ENCODE measurements at regions of chr6 and their contacts with region 1.

Region 1: DNA sequence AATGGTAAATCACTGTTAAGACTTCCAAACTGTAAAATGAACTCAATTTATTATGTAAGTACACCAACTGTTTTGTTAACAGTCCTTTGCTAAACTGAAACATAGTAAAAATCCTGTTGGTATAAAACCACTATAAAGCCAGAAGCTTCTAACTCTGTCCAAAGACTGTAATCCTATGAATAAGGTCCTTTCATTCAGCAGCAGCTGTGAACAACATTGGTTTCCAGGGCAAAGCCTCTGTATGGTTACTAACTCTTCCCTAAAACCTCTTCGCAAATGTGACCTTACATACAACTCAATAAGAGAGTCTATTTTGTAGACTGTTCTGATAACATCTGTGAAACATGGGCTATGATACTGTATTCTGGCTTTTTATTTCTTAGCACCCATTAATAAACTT is 40.1 kb downstream of the NUP153 start:
- DNase-seq: no peak
- H3K4me3 ChIP-seq: no peak overlapping the region
- H3K27ac ChIP-seq: no peak overlapping the region
- H3K4me1 ChIP-seq: no peaks in the 10 kb centered on the region
- H3K27me3 ChIP-seq: no peaks in the 10 kb centered on the region
- CTCF ChIP-seq: no peak

Region 2: DNA sequence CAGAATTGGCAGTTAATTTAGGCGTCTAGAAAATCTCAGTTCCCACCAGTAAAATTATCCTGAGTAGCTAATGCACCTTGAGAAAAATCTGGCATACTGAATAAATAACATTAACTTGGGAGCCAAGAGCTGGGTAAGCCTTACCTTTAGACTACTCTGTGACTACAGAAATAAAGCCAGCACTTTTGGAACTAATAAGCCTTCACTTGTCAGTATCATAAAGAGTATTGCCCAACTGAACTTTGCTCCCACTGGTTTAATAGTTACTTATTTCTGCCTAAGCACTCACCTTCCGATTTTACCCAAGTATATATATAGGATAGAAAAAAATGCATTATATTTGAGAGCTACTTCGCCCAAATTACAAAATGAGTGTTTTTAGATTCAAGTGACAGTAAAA is 55.8 kb before region 1 on chr6:
- CTCF ChIA-PET with region 1: no interaction called
- dilution Hi-C with region 1: no loop called
- in situ Hi-C with region 1: no loop called
- intact Hi-C with region 1: no loop called
- DNase-seq: no peak
- H3K4me3 ChIP-seq: no peak overlapping the region
- H3K27ac ChIP-seq: no peak overlapping the region
- H3K4me1 ChIP-seq: no peaks in the 10 kb centered on the region
- H3K27me3 ChIP-seq: no peaks in the 10 kb centered on the region
- CTCF ChIP-seq: no peak

Region 3: GRCh38 chr6:17768388-17768787 is 101.7 kb after region 1 on chr6:
- CTCF ChIA-PET with region 1: no interaction called
- dilution Hi-C with region 1: no loop called
- in situ Hi-C with region 1: no loop called
- intact Hi-C with region 1: loop called (anchors 10 kb)
- DNase-seq: peak; percentile 14
- H3K4me3 ChIP-seq: no peak overlapping the region
- H3K27ac ChIP-seq: no peak overlapping the region
- H3K4me1 ChIP-seq: no peaks in the 10 kb centered on the region
- H3K27me3 ChIP-seq: no peaks in the 10 kb centered on the region
- CTCF ChIP-seq: no peak

Region 4: DNA sequence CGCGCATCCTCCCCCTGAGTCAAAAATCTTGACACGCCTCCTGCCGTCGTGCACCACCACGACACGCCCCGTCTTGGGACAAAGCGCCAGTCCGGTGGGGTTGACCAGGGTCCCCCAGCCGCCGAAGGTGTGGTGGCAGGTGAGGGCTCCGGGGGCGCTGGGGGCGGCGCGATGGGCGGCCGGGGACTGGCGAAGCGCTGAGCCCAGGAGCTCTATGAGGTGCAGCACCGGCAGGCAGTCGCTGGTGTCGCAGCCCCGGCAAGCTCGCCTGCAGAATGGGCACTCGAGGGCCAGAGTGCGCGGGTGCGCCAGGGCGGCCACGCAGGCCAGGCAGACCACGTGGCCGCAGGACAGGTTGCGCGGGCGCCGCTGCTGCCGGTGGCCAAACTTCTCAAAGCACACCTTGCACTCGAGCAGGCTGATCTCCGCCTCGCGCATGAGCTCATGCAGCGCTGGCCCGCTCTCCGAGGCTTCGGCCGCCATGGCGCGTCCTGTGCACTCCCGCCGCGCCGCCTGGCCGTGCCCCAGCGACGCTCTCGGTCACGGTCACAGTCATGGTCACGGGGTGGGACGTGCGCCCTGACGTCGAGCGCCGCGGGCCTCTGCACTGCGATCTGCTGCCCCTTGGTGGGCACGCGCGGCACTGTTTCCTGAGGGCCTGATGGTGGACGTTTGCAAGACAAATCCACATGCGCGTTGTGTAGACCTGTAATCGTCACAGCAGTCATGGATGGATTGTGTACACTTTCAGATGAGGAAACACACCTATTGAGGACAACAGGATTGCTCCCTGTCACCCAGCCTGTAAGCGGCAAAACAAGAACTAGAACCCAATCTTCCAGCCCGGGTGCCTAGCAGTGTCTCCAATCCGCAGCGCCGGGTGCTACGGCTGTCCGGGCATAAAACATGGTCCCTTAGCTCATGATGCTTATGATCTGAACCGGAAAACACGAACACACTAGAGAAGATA is 455.8 kb after region 1 on chr6 and contains the start of gene NHLRC1:
- CTCF ChIA-PET with region 1: no interaction called
- dilution Hi-C with region 1: no loop called
- in situ Hi-C with region 1: no loop called
- intact Hi-C with region 1: no loop called
- DNase-seq: peak; percentile 84
- H3K4me3 ChIP-seq: peak within 1 kb of the TSS in 2 of 3 experiments; percentile 44 to 54
- H3K27ac ChIP-seq: peak within 1 kb of the TSS; percentile 31
- H3K4me1 ChIP-seq: peaks cover 7% of the 10 kb centered on the region
- H3K27me3 ChIP-seq: no peaks in the 10 kb centered on the region
- CTCF ChIP-seq: peak; percentile 91 to 96
- total RNA-seq, gene NHLRC1: 2.1 to 3.3 TPM